Activated CD8-positive, alpha-beta memory T cell treated with anti-CD3 and anti-CD28 coated beads, Interleukin-2, amount 10 ng/mL, durations not matched to agents 7 days and 5 days (primary cell): ENCODE measurements at regions of chr6 and their contacts with region 1.

Region 1: DNA sequence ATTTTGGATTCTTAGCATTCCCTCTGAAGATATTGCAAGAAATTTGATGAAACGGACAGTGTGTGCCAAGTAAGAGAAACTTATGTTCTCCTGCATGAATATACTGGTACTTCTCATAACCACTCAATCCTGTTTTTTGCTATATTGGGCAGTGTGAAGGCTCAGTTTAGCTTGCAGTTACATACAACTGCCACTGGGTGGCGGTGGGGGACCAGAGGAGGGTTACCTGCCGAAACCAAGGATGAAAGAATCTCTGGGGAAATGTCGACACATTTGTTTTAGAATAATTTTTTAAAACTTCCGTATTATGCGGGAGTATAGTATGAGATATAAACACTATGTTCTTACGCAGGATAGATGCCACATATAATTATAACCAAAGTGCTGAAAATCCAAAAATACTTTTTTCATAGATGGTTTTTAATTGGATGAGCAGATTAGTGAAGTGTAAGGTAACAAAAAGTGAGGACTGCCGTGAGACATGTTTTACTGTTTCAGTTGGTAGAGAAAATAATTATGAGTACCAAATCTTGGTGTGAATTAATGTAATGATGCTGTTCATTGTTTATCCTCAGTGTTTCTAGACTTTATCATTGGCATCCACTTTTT is 9.7 kb downstream of the TRMT11 start:
- DNase-seq: peak; percentile 72
- ATAC-seq: peak; percentile 97
- H3K4me3 Mint-ChIP-seq: peak overlapping the region; percentile 60
- H3K27ac Mint-ChIP-seq: no peak overlapping the region
- H3K4me1 Mint-ChIP-seq: peaks cover 24% of the 10 kb centered on the region
- H3K27me3 Mint-ChIP-seq: no peaks in the 10 kb centered on the region

Region 2: GRCh38 chr6:125906158-125906998 is 89.7 kb before region 1 on chr6:
- CTCF ChIA-PET with region 1: no interaction called
- DNase-seq: peak; percentile 54
- ATAC-seq: no peak
- H3K4me3 Mint-ChIP-seq: no peak overlapping the region
- H3K27ac Mint-ChIP-seq: no peak overlapping the region
- H3K4me1 Mint-ChIP-seq: peaks cover 56% of the 10 kb centered on the region
- H3K27me3 Mint-ChIP-seq: no peaks in the 10 kb centered on the region

Region 3: GRCh38 chr6:126015863-126016262 is 19.8 kb after region 1 on chr6:
- CTCF ChIA-PET with region 1: interaction called, 11 read pairs
- DNase-seq: no peak
- ATAC-seq: no peak
- H3K4me3 Mint-ChIP-seq: no peak overlapping the region
- H3K27ac Mint-ChIP-seq: no peak overlapping the region
- H3K4me1 Mint-ChIP-seq: peaks cover 7% of the 10 kb centered on the region
- H3K27me3 Mint-ChIP-seq: no peaks in the 10 kb centered on the region